Endothelial cell of umbilical vein (primary cell): ENCODE measurements at regions of chr6 and their contacts with region 1.

Region 1: GRCh38 chr6:55276745-55277530 is 50.3 kb upstream of the GFRAL start:
- DNase-seq: peak; percentile 64
- H3K4me3 ChIP-seq: no peak overlapping the region
- H3K27ac ChIP-seq: no peak overlapping the region
- H3K4me1 ChIP-seq: no peaks in the 10 kb centered on the region
- H3K27me3 ChIP-seq: peaks cover 0 to 2% of the 10 kb centered on the region in 2 experiments
- CTCF ChIP-seq: peak; percentile 47 to 56
- POLR2A ChIP-seq: no peak

Region 2: GRCh38 chr6:55220954-55221353 is 56.0 kb before region 1 on chr6:
- CTCF ChIA-PET with region 1: no interaction called
- POLR2A ChIA-PET with region 1: no interaction called
- dilution Hi-C with region 1: no loop called
- intact Hi-C with region 1: no loop called
- DNase-seq: no peak
- H3K4me3 ChIP-seq: no peak overlapping the region
- H3K27ac ChIP-seq: no peak overlapping the region
- H3K4me1 ChIP-seq: no peaks in the 10 kb centered on the region
- H3K27me3 ChIP-seq: no peaks in the 10 kb centered on the region
- CTCF ChIP-seq: no peak
- POLR2A ChIP-seq: no peak

Region 3: DNA sequence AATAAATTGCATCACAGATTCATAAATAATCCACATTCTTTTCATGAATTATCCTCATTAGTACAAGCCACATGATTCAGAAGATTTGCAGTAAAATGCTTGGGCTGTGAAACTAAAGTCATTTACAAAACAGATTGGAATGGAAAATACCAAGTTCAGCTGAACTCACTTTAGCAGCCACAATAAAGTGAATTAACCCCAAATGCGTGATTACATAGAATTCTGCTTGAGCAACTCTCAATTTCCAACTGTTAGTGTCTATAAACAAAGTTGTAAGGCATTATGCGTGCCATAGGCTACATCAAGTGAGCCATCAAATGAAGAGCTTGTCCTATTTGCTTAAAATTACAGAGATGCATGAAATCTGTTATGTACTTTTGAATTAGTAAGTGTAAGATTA is 10.0 kb before region 1 on chr6:
- CTCF ChIA-PET with region 1: interaction called, 20 read pairs
- POLR2A ChIA-PET with region 1: no interaction called
- dilution Hi-C with region 1: no loop called
- intact Hi-C with region 1: no loop called
- DNase-seq: no peak
- H3K4me3 ChIP-seq: no peak overlapping the region
- H3K27ac ChIP-seq: no peak overlapping the region
- H3K4me1 ChIP-seq: no peaks in the 10 kb centered on the region
- H3K27me3 ChIP-seq: peaks cover 0 to 4% of the 10 kb centered on the region in 2 experiments
- CTCF ChIP-seq: no peak
- POLR2A ChIP-seq: no peak

Region 4: GRCh38 chr6:55445648-55446204 is 168.8 kb after region 1 on chr6:
- CTCF ChIA-PET with region 1: interaction called, 28 read pairs
- POLR2A ChIA-PET with region 1: no interaction called
- dilution Hi-C with region 1: no loop called
- intact Hi-C with region 1: loop called (anchors 2 kb)
- DNase-seq: peak; percentile 60
- H3K4me3 ChIP-seq: no peak overlapping the region
- H3K27ac ChIP-seq: no peak overlapping the region
- H3K4me1 ChIP-seq: no peaks in the 10 kb centered on the region
- H3K27me3 ChIP-seq: peaks cover 0 to 3% of the 10 kb centered on the region in 2 experiments
- CTCF ChIP-seq: peak; percentile 23 to 27
- POLR2A ChIP-seq: no peak

Region 5: DNA sequence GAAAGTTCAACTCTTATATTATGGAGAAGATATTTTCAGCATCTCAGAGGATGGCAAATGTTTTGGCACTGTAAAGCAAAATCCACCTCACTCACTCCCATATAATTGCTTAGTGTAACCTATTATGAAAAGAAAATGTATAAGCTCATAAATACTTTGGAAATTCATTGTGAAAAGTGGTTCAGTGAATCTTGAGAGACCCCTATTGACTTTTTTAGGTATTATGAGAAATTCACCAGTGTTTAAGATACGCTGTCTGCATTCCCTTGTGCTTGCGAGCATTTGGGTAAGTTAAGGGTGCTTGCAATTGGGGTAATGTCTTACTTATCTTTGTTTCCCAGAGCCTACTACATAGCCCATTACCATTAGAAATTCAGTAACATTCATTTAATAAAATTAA is 664.8 kb after region 1 on chr6:
- CTCF ChIA-PET with region 1: interaction called, 28 read pairs
- POLR2A ChIA-PET with region 1: no interaction called
- dilution Hi-C with region 1: no loop called
- intact Hi-C with region 1: no loop called
- DNase-seq: peak; percentile 11
- H3K4me3 ChIP-seq: no peak overlapping the region
- H3K27ac ChIP-seq: no peak overlapping the region
- H3K4me1 ChIP-seq: no peaks in the 10 kb centered on the region
- H3K27me3 ChIP-seq: no peaks in the 10 kb centered on the region
- CTCF ChIP-seq: no peak
- POLR2A ChIP-seq: no peak